A673 (cell line): ENCODE measurements at regions of chr10 and their contacts with region 1.

Region 1: GRCh38 chr10:116796910-116797513 is 52.3 kb upstream of the ENO4 start:
- DNase-seq: peak; percentile 93
- H3K4me3 ChIP-seq: no peak overlapping the region
- H3K27ac ChIP-seq: no peak overlapping the region
- H3K4me1 ChIP-seq: peaks cover 24% of the 10 kb centered on the region
- H3K27me3 ChIP-seq: no peaks in the 10 kb centered on the region
- CTCF ChIP-seq: peak; percentile 97

Region 2: GRCh38 chr10:116891208-116891607 is 94.2 kb after region 1 on chr10:
- CTCF ChIA-PET with region 1: no interaction called
- POLR2A ChIA-PET with region 1: no interaction called
- intact Hi-C with region 1: loop called (anchors 5 kb)
- DNase-seq: peak; percentile 97
- H3K4me3 ChIP-seq: no peak overlapping the region
- H3K27ac ChIP-seq: peak overlapping the region; percentile 46
- H3K4me1 ChIP-seq: peaks cover 63% of the 10 kb centered on the region
- H3K27me3 ChIP-seq: no peaks in the 10 kb centered on the region
- CTCF ChIP-seq: no peak